ENCODE measurements at regions of chr17 and their contacts with region 1.

Region 1: DNA sequence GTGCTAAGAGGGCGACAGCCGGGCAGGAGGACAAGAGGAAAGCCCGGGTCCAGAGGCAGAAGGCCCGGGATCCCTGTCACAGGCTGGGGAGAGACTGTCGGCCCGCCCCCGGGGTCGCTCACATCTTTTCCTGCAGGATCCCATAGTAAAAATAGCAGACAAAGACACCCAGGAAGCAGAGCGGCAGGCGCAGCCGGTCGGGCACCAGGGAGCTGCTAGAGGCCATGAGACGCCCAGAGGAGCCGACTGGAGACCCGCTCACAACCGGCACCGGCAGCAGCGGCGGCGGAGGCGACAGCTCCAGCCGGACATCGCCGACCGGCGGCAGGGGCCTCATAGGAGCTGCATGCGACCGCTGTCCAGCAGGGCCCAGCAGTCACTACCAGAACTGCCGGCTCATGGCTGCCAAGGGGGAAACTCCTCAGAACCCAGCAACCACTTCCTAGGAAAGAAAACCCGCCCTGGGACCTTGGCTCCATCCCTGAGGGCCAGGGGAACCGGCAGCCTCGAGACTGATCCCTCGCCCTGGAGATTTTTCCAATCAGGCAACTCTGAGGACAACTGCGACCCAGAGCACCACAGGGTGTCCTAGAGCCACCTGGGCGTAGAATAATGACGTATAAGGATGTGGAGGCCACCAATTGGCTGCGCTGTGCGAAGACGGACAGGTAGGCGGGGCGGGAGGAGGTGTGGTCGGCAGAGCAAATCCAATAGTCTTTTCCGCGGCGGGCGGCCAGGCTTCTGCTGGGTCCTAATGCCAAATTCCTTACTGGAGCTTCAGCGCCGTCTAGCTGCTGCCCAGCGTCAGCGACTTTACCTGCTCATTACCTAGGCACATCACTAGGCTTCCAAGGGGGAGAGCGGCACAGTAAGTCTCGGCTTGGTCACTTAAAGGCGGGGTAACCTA is at the start of gene SLC35B1:
- DNase-seq: peak; percentile 99 to 100 (median 100)
- H3K4me3 ChIP-seq: peak within 1 kb of the TSS; percentile 77 to 95 (median 87)
- H3K27ac ChIP-seq: peak within 1 kb of the TSS; percentile 98 to 99
- H3K4me1 ChIP-seq: peaks cover 6 to 52% (median 31%) of the 10 kb centered on the region in 4 experiments
- H3K27me3 ChIP-seq: no peaks in the 10 kb centered on the region

Region 2: GRCh38 chr17:49694847-49695683 is 12.8 kb before region 1 on chr17:
- CTCF ChIA-PET with region 1: interaction called, 73 read pairs
- POLR2A ChIA-PET with region 1: interaction called, 3 read pairs
- DNase-seq: peak; percentile 65 to 83 (median 80)
- H3K4me3 ChIP-seq: peak overlapping the region in 1 of 7 experiments; percentile 55
- H3K27ac ChIP-seq: no peak overlapping the region
- H3K4me1 ChIP-seq: peaks cover 7 to 21% (median 20%) of the 10 kb centered on the region in 4 experiments
- H3K27me3 ChIP-seq: no peaks in the 10 kb centered on the region

Region 3: DNA sequence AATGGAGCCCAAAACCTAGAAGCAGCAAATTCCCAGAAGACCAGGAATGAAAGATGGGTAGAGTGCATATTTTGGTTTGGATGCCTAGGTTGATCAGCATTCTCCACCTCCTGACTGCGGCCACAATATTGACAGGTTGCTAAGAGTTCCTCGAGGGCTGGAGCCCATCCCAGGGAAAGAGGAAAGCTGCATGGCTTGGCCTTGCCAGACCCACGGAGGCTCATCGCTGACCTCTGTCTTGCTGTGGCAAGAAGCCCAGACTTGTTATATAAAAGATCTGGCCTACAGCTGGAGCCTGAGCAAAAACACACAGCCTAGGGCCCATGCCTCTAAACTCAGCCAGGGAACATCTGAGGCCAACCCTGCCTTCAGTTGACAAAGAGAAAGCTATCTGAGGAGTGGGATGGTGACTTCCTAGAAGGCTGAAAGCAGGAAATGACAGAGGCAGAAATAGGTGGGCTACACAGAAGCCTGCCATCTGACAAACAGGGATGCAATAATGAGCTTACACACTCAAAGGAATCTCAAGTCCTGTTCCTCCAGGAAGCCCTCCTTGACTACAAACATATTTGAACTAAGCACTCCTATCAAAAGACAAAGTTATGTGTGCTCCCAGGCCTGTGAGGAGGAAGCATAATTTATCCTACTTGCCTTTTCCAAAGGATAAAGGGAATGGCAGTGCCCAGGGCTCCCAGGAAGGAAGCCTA is 22.4 kb after region 1 on chr17:
- CTCF ChIA-PET with region 1: interaction called, 38 read pairs
- POLR2A ChIA-PET with region 1: interaction called, 3 read pairs
- DNase-seq: no peak
- H3K4me3 ChIP-seq: peak overlapping the region in 2 of 7 experiments; percentile 2 to 35
- H3K27ac ChIP-seq: peak overlapping the region; percentile 52 to 74
- H3K4me1 ChIP-seq: peaks cover 9 to 61% (median 41%) of the 10 kb centered on the region in 4 experiments
- H3K27me3 ChIP-seq: no peaks in the 10 kb centered on the region

Region 4: GRCh38 chr17:49748791-49749190 is 40.9 kb after region 1 on chr17:
- CTCF ChIA-PET with region 1: interaction called, 8 read pairs
- POLR2A ChIA-PET with region 1: interaction called, 10 read pairs
- DNase-seq: peak in 2 of 3 donors; percentile 79 to 90
- H3K4me3 ChIP-seq: peak overlapping the region in 1 of 7 experiments; percentile 6
- H3K27ac ChIP-seq: peak overlapping the region; percentile 35 to 78
- H3K4me1 ChIP-seq: peaks cover 46 to 93% (median 68%) of the 10 kb centered on the region in 4 experiments
- H3K27me3 ChIP-seq: no peaks in the 10 kb centered on the region

Region 5: GRCh38 chr17:49779739-49780231 is 71.9 kb after region 1 on chr17:
- CTCF ChIA-PET with region 1: interaction called, 24 read pairs
- POLR2A ChIA-PET with region 1: no interaction called
- DNase-seq: peak; percentile 47 to 61 (median 58)
- H3K4me3 ChIP-seq: no peak overlapping the region
- H3K27ac ChIP-seq: no peak overlapping the region
- H3K4me1 ChIP-seq: peaks cover 0 to 47% (median 17%) of the 10 kb centered on the region in 4 experiments
- H3K27me3 ChIP-seq: no peaks in the 10 kb centered on the region